ENCODE measurements at regions of chr3 and their contacts with region 1.

Region 1: DNA sequence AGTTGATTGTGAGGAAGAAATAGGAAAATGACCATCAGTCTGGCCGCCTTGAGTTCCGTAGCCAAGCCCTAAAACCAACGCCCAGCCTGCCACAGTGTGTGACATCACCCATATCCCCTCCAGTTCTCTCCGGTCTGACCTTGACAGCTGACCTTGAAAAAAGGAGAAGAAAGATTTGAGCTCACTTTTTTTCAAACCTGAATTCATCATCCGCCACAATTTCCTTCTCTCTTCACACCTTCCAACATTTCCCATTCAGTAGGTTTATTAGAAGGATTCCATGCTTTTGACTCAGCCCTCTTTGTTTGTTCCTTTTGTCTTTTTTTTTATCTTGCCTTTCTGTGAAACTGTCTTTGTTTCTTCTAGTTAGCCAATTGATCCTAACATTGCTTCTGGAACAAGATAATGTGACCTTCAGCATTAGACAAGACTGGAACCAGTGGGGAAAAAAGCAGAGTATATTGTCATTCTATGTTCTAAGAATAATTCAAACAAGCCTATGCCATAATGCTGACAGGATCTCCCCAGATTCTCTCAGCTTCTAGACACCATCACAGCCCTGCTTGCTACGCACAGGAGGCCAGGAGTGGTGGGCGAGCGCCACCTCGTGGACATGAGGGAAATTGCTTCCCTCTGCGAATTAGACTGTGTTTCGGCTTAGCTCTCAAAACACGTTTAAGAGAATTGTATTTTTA is 283.1 kb downstream of the FGF12 start:
- DNase-seq: peak; percentile 62
- ATAC-seq: peak; percentile 61
- H3K4me3 ChIP-seq: no peak overlapping the region
- H3K4me3 Mint-ChIP-seq: no peak overlapping the region
- H3K27ac ChIP-seq: no peak overlapping the region
- H3K27ac Mint-ChIP-seq: no peak overlapping the region
- H3K4me1 ChIP-seq: no peaks in the 10 kb centered on the region
- H3K4me1 Mint-ChIP-seq: peaks cover 4% of the 10 kb centered on the region
- H3K27me3 ChIP-seq: peaks cover 0 to 9% (median 2%) of the 10 kb centered on the region in 4 experiments
- H3K27me3 Mint-ChIP-seq: peaks cover 35% of the 10 kb centered on the region
- CTCF ChIP-seq: peak; percentile 99

Region 2: DNA sequence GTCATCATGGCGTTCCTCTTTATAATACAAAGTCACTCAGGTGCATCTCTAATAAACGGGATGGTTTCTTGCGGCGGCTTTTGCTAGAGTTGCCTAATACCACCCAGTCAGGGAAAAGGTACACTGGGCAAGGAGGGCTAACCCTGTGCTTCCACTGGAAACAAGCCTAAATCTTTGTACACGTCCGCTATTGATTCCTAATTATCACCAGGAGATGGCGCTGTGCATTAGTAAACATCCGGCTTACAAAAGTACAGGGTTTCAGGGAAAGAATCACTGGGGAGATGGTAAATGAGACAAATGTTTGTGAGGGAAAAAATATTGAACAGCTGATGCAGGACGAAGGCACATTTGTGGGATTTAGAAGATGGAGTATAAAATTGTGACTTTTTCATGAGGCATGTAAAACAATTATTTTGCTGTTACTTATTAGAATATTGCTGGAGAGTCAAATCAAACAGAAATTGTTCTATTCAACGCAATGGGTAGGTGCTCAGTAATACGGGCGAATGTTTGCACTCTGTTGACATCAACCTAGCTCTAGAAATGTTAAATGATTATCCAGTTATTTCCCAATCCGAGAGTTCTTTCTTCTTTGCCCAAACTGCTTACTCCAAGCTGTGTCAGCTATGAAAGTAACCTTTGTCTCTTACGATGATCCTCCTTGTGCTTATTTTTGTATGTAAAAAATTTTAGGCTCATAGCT is 1632.3 kb before region 1 on chr3:
- CTCF ChIA-PET with region 1: no interaction called
- POLR2A ChIA-PET with region 1: no interaction called
- intact Hi-C with region 1: loop called (anchors 5 kb)
- DNase-seq: peak; percentile 13
- ATAC-seq: no peak
- H3K4me3 ChIP-seq: no peak overlapping the region
- H3K4me3 Mint-ChIP-seq: no peak overlapping the region
- H3K27ac ChIP-seq: no peak overlapping the region
- H3K27ac Mint-ChIP-seq: no peak overlapping the region
- H3K4me1 ChIP-seq: no peaks in the 10 kb centered on the region
- H3K4me1 Mint-ChIP-seq: no peaks in the 10 kb centered on the region
- H3K27me3 ChIP-seq: no peaks in the 10 kb centered on the region
- H3K27me3 Mint-ChIP-seq: peaks cover 4% of the 10 kb centered on the region
- CTCF ChIP-seq: peak; percentile 67

Region 3: GRCh38 chr3:191136347-191136746 is 1307.9 kb before region 1 on chr3:
- CTCF ChIA-PET with region 1: interaction called, 27 read pairs
- POLR2A ChIA-PET with region 1: no interaction called
- intact Hi-C with region 1: loop called (anchors 2 kb)
- DNase-seq: peak; percentile 45
- ATAC-seq: no peak
- H3K4me3 ChIP-seq: no peak overlapping the region
- H3K4me3 Mint-ChIP-seq: peak overlapping the region; percentile 18
- H3K27ac ChIP-seq: no peak overlapping the region
- H3K27ac Mint-ChIP-seq: peak overlapping the region; percentile 4
- H3K4me1 ChIP-seq: peaks cover 15 to 28% of the 10 kb centered on the region in 2 donors
- H3K4me1 Mint-ChIP-seq: peaks cover 40% of the 10 kb centered on the region
- H3K27me3 ChIP-seq: no peaks in the 10 kb centered on the region
- H3K27me3 Mint-ChIP-seq: no peaks in the 10 kb centered on the region
- CTCF ChIP-seq: peak; percentile 45

Region 4: DNA sequence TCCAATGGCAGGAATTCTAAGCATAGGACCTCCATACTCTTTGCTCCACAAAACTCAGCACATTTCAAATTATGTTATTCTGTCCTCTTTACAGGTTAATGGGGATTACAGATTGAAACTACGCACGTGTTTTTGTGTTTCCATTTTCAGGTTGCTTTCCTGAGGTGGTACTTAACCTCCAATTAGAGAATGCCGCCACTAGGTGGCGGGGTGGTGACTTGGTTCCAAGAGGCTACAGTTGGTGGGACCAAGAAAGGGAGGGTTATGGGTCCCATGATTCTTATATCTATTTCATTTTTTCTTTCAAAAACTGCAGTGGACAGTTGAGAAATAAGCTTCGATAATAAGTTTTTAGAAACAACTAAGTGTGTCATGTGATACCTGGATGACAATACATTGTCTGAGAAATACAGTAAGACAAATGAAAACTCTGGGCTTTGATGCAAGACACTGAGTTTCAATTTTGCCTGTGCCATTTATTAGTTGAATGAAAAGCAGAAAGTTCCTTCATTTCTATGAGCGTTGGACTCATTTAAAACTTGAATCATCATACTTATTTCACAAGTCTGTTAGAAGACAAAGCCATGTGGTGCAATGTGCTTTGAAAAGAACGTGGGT is 255.9 kb before region 1 on chr3:
- CTCF ChIA-PET with region 1: interaction called, 13 read pairs
- POLR2A ChIA-PET with region 1: no interaction called
- intact Hi-C with region 1: no loop called
- DNase-seq: peak; percentile 38
- ATAC-seq: no peak
- H3K4me3 ChIP-seq: no peak overlapping the region
- H3K4me3 Mint-ChIP-seq: peak overlapping the region; percentile 27
- H3K27ac ChIP-seq: no peak overlapping the region
- H3K27ac Mint-ChIP-seq: no peak overlapping the region
- H3K4me1 ChIP-seq: no peaks in the 10 kb centered on the region
- H3K4me1 Mint-ChIP-seq: peaks cover 5% of the 10 kb centered on the region
- H3K27me3 ChIP-seq: no peaks in the 10 kb centered on the region
- H3K27me3 Mint-ChIP-seq: peaks cover 7% of the 10 kb centered on the region
- CTCF ChIP-seq: peak; percentile 72

Region 5: GRCh38 chr3:192433704-192434103 is 10.5 kb before region 1 on chr3:
- CTCF ChIA-PET with region 1: interaction called, 27 read pairs
- POLR2A ChIA-PET with region 1: no interaction called
- intact Hi-C with region 1: no loop called
- DNase-seq: no peak
- ATAC-seq: no peak
- H3K4me3 ChIP-seq: no peak overlapping the region
- H3K4me3 Mint-ChIP-seq: no peak overlapping the region
- H3K27ac ChIP-seq: no peak overlapping the region
- H3K27ac Mint-ChIP-seq: no peak overlapping the region
- H3K4me1 ChIP-seq: no peaks in the 10 kb centered on the region
- H3K4me1 Mint-ChIP-seq: no peaks in the 10 kb centered on the region
- H3K27me3 ChIP-seq: peaks cover 0 to 3% (median 0%) of the 10 kb centered on the region in 4 experiments
- H3K27me3 Mint-ChIP-seq: peaks cover 20% of the 10 kb centered on the region
- CTCF ChIP-seq: no peak

Region 6: GRCh38 chr3:192825657-192826200 is 381.5 kb after region 1 on chr3:
- CTCF ChIA-PET with region 1: no interaction called
- POLR2A ChIA-PET with region 1: no interaction called
- intact Hi-C with region 1: no loop called
- DNase-seq: no peak
- ATAC-seq: no peak
- H3K4me3 ChIP-seq: no peak overlapping the region
- H3K4me3 Mint-ChIP-seq: no peak overlapping the region
- H3K27ac ChIP-seq: no peak overlapping the region
- H3K27ac Mint-ChIP-seq: no peak overlapping the region
- H3K4me1 ChIP-seq: no peaks in the 10 kb centered on the region
- H3K4me1 Mint-ChIP-seq: no peaks in the 10 kb centered on the region
- H3K27me3 ChIP-seq: peaks cover 0 to under 1% (median 0%) of the 10 kb centered on the region in 4 experiments
- H3K27me3 Mint-ChIP-seq: peaks cover 6% of the 10 kb centered on the region
- CTCF ChIP-seq: no peak

Measured in B cell (primary cell).